ENCODE measurements at regions of chr6 and their contacts with region 1.

Region 1: GRCh38 chr6:142112451-142113061 is 20.2 kb upstream of the GJE1 start:
- DNase-seq: peak; percentile 54 to 88
- H3K4me3 ChIP-seq: no peak overlapping the region
- H3K4me1 ChIP-seq: no peaks in the 10 kb centered on the region
- H3K27me3 ChIP-seq: peaks cover 5% of the 10 kb centered on the region

Region 2: GRCh38 chr6:141677598-141678211 is 434.9 kb before region 1 on chr6:
- in situ Hi-C with region 1: loop called (anchors 25 kb)
- DNase-seq: peak; percentile 20 to 23
- H3K4me3 ChIP-seq: no peak overlapping the region
- H3K4me1 ChIP-seq: no peaks in the 10 kb centered on the region
- H3K27me3 ChIP-seq: peaks cover 5% of the 10 kb centered on the region; the same call in 1 of the 2 replicates

Region 3: DNA sequence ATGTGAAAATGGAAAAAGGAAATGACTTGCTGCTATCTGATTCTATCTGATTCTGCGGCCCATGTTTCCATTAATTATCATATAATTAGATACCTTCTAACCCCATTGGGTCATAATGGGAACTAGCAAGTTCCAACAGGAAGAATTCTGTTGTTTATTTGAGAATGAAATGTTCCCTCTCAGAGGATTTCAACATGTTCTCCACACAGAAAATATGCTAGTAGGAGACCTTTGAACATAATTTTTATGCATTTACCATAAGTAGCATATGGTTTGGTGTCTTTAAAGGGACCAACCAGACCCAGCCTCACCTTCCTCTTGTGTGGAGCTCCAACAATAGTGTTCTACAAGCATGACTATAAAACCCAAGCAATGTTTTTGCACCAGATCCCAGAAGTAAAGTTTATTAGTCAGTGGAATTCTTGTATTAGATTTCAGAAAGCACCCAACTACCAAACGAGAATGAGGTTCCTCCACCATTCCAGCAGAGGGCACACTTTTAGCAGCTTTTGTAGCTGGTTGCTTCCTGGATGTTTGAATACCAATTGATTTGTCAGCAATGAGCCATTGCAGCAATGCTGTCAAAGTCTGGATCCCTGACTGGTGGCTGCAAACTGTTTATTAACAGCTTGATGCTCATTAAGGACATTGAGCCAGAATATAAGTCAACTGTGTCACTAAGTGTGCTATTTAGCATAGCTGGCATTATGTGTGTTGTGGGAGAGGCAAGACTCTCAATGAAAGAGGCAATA is 123.4 kb before region 1 on chr6:
- in situ Hi-C with region 1: loop called (anchors 25 kb)
- DNase-seq: peak; percentile 47 to 54
- H3K4me3 ChIP-seq: no peak overlapping the region
- H3K4me1 ChIP-seq: no peaks in the 10 kb centered on the region
- H3K27me3 ChIP-seq: no peaks in the 10 kb centered on the region